ENCODE measurements at regions of chr6 and their contacts with region 1.

Region 1: DNA sequence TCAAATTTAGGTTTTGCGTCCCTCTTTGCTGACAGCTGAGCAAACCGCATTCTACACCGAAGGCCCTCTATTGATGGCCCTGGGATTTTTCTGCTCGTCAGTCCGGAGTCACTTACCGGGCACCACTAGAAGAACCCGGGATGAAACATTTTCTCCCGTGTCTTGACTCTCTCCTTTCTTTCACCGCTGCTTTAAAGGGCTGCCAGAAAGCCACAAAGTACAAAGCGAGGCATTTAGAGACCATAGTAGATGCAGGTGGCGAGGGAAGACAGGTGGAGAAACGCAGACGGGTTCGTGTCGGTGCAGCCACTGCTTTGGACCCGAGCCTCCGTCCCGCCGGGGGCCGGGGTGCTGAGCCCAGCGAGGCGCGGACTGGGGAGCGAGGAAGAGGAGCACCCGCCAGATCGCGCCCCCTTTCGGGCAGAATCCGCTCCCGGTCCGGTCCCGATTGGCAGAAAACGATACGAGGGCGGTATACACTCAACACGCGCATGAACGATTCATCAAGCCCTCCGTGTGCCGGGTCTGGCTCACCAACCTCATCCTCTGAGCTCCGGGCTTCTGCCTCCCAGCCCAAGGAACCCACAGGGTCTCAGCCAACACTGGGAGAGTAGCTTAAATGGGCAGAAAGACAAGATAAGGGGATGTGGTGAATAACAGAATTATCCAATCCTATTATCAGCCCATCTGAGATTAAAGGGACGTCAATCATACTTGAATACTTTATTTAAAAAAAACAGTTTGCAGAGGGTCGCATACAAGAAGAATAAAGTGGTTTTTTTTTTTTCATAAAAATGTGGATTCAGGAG is 84.9 kb downstream of the TRIM27 start:
- DNase-seq: peak; percentile 40
- ATAC-seq: peak; percentile 88
- H3K4me3 ChIP-seq: peak overlapping the region; percentile 70
- H3K27ac ChIP-seq: no peak overlapping the region
- H3K4me1 ChIP-seq: no peaks in the 10 kb centered on the region
- H3K27me3 ChIP-seq: peaks cover 0 to 2% of the 10 kb centered on the region in 2 experiments; a peak in 1 of 4 replicates
- CTCF ChIP-seq: peak; percentile 63 to 67 (median 66)
- EP300 ChIP-seq: no peak
- POLR2A ChIP-seq: no peak
- RAD21 ChIP-seq: 0 out of 2 replicates have a peak, but pooled peaks have one; percentile 15

Region 2: GRCh38 chr6:28683944-28684538 is 154.8 kb before region 1 on chr6:
- CTCF ChIA-PET with region 1: interaction called, 13 read pairs
- POLR2A ChIA-PET with region 1: no interaction called
- RAD21 ChIA-PET with region 1: no interaction called
- SMC1A ChIA-PET with region 1: interaction called, 4 read pairs
- in situ Hi-C with region 1: no loop called
- intact Hi-C with region 1: loop called (anchors 2 kb)
- DNase-seq: no peak
- ATAC-seq: peak; percentile 60
- H3K4me3 ChIP-seq: no peak overlapping the region
- H3K27ac ChIP-seq: no peak overlapping the region
- H3K4me1 ChIP-seq: no peaks in the 10 kb centered on the region
- H3K27me3 ChIP-seq: no peaks in the 10 kb centered on the region
- CTCF ChIP-seq: peak; percentile 52 to 62 (median 60); a peak in 5 of 6 replicates
- EP300 ChIP-seq: no peak
- POLR2A ChIP-seq: no peak
- RAD21 ChIP-seq: peak; percentile 76

Region 3: DNA sequence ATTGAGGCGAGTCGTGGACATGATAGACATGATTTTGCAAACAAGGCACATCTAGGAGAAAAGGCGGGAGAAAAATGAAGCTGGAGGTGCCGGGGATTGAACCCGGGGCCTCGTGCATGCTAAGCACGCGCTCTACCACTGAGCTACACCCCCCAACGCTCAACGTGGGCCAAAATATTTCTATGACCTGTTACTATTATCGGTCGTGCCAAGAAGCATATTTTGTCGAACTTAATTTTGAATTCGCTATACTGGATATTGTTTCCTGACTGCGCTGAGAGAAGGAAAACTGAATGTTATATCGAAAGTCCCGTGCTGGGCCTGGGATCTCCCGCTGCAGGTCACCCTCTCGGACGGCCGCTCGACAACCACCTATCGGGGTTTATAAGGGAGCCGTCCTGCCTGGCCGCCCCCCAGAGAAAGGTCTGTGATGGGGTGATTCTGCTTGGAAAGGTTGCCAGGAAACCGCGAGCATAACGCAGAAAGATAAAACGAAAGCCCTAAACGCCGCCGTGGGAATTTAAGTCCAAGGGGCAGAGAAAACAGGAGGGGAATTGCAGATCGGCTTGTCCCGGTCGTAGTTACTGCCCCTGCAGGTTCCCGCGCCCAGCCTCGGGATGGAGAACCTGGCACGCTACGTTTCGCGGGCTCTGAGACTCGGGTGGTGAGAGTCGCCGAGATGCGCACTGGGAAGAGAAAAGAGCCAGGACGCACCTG is 24.9 kb after region 1 on chr6:
- CTCF ChIA-PET with region 1: interaction called, 26 read pairs
- POLR2A ChIA-PET with region 1: interaction called, 6 read pairs
- RAD21 ChIA-PET with region 1: interaction called, 7 read pairs
- SMC1A ChIA-PET with region 1: interaction called, 8 read pairs
- in situ Hi-C with region 1: no loop called
- intact Hi-C with region 1: loop called (anchors 1 kb)
- DNase-seq: peak; percentile 61
- ATAC-seq: peak; percentile 72
- H3K4me3 ChIP-seq: peak overlapping the region; percentile 92
- H3K27ac ChIP-seq: 0 out of 2 replicates have a peak overlapping the region, but pooled peaks have one; percentile 7
- H3K4me1 ChIP-seq: peaks cover 2% of the 10 kb centered on the region; the same call in 1 of the 2 replicates
- H3K27me3 ChIP-seq: no peaks in the 10 kb centered on the region; a peak in 1 of 4 replicates
- CTCF ChIP-seq: no peak
- EP300 ChIP-seq: peak in 1 of 2 experiments; percentile 4; a peak in 1 of 4 replicates
- POLR2A ChIP-seq: no peak
- RAD21 ChIP-seq: no peak

Region 4: GRCh38 chr6:28895134-28895812 is 56.4 kb after region 1 on chr6:
- CTCF ChIA-PET with region 1: interaction called, 17 read pairs
- POLR2A ChIA-PET with region 1: interaction called, 5 read pairs
- RAD21 ChIA-PET with region 1: interaction called, 9 read pairs
- SMC1A ChIA-PET with region 1: interaction called, 5 read pairs
- in situ Hi-C with region 1: no loop called
- intact Hi-C with region 1: loop called (anchors 1 kb)
- DNase-seq: peak; percentile 96
- ATAC-seq: peak; percentile 88
- H3K4me3 ChIP-seq: peak overlapping the region; percentile 87
- H3K27ac ChIP-seq: peak overlapping the region; percentile 89
- H3K4me1 ChIP-seq: no peaks in the 10 kb centered on the region
- H3K27me3 ChIP-seq: no peaks in the 10 kb centered on the region
- CTCF ChIP-seq: no peak
- EP300 ChIP-seq: no peak
- POLR2A ChIP-seq: peak; percentile 87
- RAD21 ChIP-seq: no peak

Region 5: GRCh38 chr6:28953039-28953584 is 114.3 kb after region 1 on chr6:
- CTCF ChIA-PET with region 1: no interaction called
- POLR2A ChIA-PET with region 1: no interaction called
- RAD21 ChIA-PET with region 1: no interaction called
- SMC1A ChIA-PET with region 1: interaction called, 10 read pairs
- in situ Hi-C with region 1: no loop called
- intact Hi-C with region 1: no loop called
- DNase-seq: peak; percentile 56
- ATAC-seq: peak; percentile 92
- H3K4me3 ChIP-seq: peak overlapping the region; percentile 72
- H3K27ac ChIP-seq: no peak overlapping the region
- H3K4me1 ChIP-seq: no peaks in the 10 kb centered on the region
- H3K27me3 ChIP-seq: no peaks in the 10 kb centered on the region
- CTCF ChIP-seq: no peak
- EP300 ChIP-seq: peak in 1 of 2 experiments; percentile 78; a peak in 1 of 4 replicates
- POLR2A ChIP-seq: no peak
- RAD21 ChIP-seq: no peak

Region 6: DNA sequence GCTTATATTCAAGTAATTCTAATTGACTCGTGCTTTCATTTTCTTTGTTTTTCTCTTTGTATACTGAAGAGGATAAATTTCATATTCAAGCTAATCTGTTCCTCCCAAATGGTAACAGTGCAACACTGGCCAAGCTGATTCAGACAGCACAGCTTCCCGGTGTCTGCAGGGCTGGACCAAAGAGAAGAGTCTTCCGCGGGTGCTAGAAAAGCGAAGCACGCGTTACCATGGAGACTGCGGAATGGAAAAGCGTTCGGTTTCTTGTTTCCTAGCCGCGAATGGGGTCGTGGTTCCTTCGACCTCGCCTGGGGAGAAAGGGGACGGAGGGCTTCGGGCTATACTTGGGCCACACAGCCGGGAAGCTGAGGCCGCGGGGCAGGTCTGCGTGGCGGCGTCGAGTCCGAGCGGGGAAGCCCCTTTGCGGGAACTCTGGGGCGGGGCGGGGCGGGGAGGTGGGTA is 172.5 kb after region 1 on chr6:
- CTCF ChIA-PET with region 1: interaction called, 89 read pairs
- POLR2A ChIA-PET with region 1: no interaction called
- RAD21 ChIA-PET with region 1: interaction called, 27 read pairs
- SMC1A ChIA-PET with region 1: interaction called, 27 read pairs
- in situ Hi-C with region 1: loop called (anchors 5 kb)
- intact Hi-C with region 1: no loop called
- DNase-seq: no peak
- ATAC-seq: no peak
- H3K4me3 ChIP-seq: peak overlapping the region; percentile 43; the same call in 1 of the 2 replicates
- H3K27ac ChIP-seq: no peak overlapping the region
- H3K4me1 ChIP-seq: no peaks in the 10 kb centered on the region
- H3K27me3 ChIP-seq: peaks cover 0 to 2% of the 10 kb centered on the region in 2 experiments; a peak in 3 of 4 replicates
- CTCF ChIP-seq: no peak
- EP300 ChIP-seq: no peak
- POLR2A ChIP-seq: no peak
- RAD21 ChIP-seq: no peak

Region 7: DNA sequence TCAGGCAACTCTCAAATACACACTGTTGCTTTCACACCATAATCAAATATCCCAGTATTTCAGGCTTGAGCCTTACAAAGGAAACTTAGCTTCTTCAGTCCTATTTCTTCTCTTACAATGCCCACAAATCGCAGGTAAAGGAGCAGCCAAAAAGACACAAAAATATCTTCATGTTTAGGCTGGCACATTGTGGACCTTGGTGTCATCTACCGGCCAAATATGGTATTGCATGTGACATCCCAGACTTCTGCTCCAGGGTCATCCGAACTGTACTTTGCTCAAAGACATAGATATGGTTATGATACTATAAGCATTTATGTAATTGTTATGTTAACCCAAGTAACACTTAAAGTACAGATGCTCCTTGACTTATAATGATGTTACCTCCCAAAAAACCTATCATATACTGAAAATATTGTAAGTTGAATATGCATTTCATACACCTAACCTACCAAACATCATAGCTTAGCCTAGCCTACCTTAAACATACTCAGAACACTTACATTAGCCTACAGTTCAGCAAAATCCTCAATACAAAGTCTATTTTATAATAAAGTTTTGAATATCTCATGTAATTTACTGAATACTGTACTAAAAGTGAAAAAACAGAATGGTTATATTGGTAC is 750.7 kb after region 1 on chr6:
- CTCF ChIA-PET with region 1: interaction called, 12 read pairs
- POLR2A ChIA-PET with region 1: no interaction called
- RAD21 ChIA-PET with region 1: interaction called, 5 read pairs
- SMC1A ChIA-PET with region 1: interaction called, 4 read pairs
- in situ Hi-C with region 1: no loop called
- intact Hi-C with region 1: loop called (anchors 10 kb)
- DNase-seq: peak; percentile 12
- ATAC-seq: peak; percentile 86
- H3K4me3 ChIP-seq: no peak overlapping the region
- H3K27ac ChIP-seq: no peak overlapping the region
- H3K4me1 ChIP-seq: no peaks in the 10 kb centered on the region
- H3K27me3 ChIP-seq: no peaks in the 10 kb centered on the region; a peak in 1 of 4 replicates
- CTCF ChIP-seq: peak; percentile 94 to 99 (median 99)
- EP300 ChIP-seq: no peak
- POLR2A ChIP-seq: no peak
- RAD21 ChIP-seq: peak; percentile 98

Measured in GM12878 (cell line).